SK-N-SH (cell line): ENCODE measurements at regions of chr17 and their contacts with region 1.

Region 1: DNA sequence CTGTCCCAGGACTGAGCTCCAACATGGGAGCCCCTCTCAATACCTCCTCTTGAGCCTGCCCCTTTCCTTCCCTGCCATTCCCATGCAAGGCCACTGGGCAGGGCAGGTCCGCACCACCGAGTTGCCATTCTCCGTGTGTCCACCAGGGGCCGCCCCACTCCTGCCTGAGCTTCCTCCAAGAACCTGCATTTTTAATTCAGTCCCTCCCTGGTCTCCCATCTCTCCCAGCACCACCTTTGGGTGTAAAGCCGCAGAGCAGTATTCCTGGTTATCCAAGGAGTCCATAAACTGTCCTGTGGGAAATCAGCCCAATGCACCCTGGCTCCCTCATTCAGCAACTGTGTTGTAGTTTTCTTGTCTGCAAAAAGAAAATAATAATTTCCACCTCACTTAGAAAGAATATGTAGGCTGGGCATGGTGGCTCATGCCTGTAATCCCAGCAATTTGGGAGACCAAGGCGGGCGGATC is 15.9 kb upstream of the ANKRD40CL start:
- DNase-seq: peak; percentile 97
- H3K4me3 ChIP-seq: no peak overlapping the region
- H3K27ac ChIP-seq: no peak overlapping the region
- H3K4me1 ChIP-seq: no peaks in the 10 kb centered on the region
- H3K27me3 ChIP-seq: no peaks in the 10 kb centered on the region
- CTCF ChIP-seq: peak; percentile 100
- EP300 ChIP-seq: no peak
- RAD21 ChIP-seq: peak; percentile 100

Region 2: GRCh38 chr17:50765454-50766221 is 17.6 kb before region 1 on chr17:
- CTCF ChIA-PET with region 1: interaction called, 95 read pairs
- POLR2A ChIA-PET with region 1: no interaction called
- DNase-seq: no peak
- H3K4me3 ChIP-seq: no peak overlapping the region
- H3K27ac ChIP-seq: peak overlapping the region in 1 of 2 experiments; percentile 7; a peak in 1 of 4 replicates
- H3K4me1 ChIP-seq: peaks cover 0 to 24% of the 10 kb centered on the region in 2 experiments; a peak in 2 of 4 replicates
- H3K27me3 ChIP-seq: no peaks in the 10 kb centered on the region
- CTCF ChIP-seq: no peak
- EP300 ChIP-seq: no peak
- RAD21 ChIP-seq: no peak

Region 3: GRCh38 chr17:50806141-50806643 is 23.0 kb after region 1 on chr17:
- CTCF ChIA-PET with region 1: interaction called, 47 read pairs
- POLR2A ChIA-PET with region 1: no interaction called
- DNase-seq: no peak
- H3K4me3 ChIP-seq: no peak overlapping the region
- H3K27ac ChIP-seq: no peak overlapping the region
- H3K4me1 ChIP-seq: no peaks in the 10 kb centered on the region
- H3K27me3 ChIP-seq: no peaks in the 10 kb centered on the region
- CTCF ChIP-seq: peak; percentile 48
- EP300 ChIP-seq: no peak
- RAD21 ChIP-seq: no peak

Region 4: DNA sequence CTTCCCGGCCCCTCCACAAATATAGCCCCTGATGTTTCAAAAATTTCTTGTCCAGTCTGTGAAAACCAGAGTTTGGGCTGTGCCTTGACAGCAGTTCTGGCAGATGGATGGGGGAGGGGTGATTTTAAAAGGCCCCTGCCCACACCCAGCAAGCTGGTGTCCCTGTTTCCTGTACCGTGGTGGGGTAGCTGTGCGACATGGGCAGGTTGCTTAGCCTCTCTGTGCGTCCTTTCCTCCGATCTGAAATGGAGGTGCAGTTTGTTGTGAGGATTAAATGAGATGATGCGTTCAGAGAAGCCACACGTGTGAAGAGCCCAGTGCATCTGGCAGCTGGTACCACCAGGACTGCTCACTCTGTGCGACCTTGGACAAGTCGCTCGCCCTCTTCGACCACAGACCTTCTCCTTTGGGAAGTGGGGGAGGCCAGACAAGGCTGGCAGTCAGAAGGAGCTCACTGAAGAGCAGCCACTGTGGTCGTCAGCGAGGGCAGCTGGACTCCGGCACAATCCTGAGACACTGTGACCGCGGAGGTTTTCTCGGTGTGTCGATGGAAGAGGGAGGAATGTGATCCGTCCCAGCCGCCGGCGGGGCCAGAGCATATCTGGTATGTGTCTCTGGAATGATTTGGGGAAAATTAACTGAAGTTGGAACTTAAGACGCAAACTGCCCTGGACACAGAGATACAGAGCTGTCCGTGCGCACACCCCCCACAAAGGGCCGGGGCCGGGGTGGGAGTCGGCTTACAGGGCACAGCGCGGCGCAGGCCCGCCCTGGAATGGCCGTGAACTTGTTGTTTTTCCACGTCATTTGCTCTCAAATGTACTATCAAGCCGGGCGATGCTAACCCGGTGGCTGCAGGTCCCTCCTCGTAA is 51.4 kb after region 1 on chr17:
- CTCF ChIA-PET with region 1: interaction called, 520 read pairs
- POLR2A ChIA-PET with region 1: no interaction called
- DNase-seq: no peak
- H3K4me3 ChIP-seq: no peak overlapping the region
- H3K27ac ChIP-seq: no peak overlapping the region
- H3K4me1 ChIP-seq: peaks cover 0 to 12% of the 10 kb centered on the region in 2 experiments; a peak in 1 of 4 replicates
- H3K27me3 ChIP-seq: no peaks in the 10 kb centered on the region; the same call in 1 of the 2 replicates
- CTCF ChIP-seq: no peak
- EP300 ChIP-seq: no peak
- RAD21 ChIP-seq: no peak

Region 5: DNA sequence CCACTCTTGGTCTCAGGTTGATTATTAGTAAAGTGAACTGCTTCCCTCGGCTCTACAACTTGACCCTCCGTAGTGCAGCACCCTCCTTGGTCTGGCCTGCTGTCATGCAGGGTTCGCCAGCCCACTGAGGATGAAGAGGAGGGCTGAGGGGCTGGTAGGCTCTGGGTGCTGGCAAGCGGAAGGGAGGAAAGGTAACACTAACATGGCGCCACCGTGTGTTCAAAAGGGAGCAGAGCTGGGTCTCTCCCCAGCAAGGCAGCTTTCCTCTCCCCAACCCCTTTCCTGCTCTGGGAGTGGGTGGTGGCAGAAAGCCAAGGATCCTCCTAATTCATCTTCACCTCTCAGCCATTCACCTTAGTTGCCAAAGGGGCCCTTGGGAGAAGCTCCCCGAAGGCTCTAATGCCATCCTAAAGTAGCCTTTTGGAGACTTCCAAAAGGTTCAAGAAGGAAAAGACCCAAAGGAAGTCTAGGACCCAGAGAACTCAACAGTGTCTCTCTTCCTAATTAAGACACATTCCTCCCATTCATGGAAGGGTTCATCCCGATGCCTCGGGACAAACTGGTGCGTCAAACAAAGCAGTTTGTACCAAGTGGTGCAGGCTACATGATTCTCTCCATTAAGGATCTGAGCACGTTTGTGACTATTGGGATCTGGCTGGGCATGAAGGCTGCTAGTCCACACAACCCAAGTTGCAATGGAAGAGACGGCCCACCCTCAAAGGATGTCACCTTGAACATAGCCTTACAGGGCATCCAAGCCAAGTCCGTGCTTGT is 173.7 kb after region 1 on chr17:
- CTCF ChIA-PET with region 1: interaction called, 73 read pairs
- POLR2A ChIA-PET with region 1: interaction called, 3 read pairs
- DNase-seq: peak; percentile 75
- H3K4me3 ChIP-seq: no peak overlapping the region; a peak in 1 of 4 replicates
- H3K27ac ChIP-seq: peak overlapping the region in 1 of 2 experiments; percentile 39; a peak in 1 of 4 replicates
- H3K4me1 ChIP-seq: peaks cover 16 to 55% of the 10 kb centered on the region in 2 experiments
- H3K27me3 ChIP-seq: no peaks in the 10 kb centered on the region
- CTCF ChIP-seq: peak; percentile 90
- EP300 ChIP-seq: no peak
- RAD21 ChIP-seq: peak; percentile 89

Region 6: DNA sequence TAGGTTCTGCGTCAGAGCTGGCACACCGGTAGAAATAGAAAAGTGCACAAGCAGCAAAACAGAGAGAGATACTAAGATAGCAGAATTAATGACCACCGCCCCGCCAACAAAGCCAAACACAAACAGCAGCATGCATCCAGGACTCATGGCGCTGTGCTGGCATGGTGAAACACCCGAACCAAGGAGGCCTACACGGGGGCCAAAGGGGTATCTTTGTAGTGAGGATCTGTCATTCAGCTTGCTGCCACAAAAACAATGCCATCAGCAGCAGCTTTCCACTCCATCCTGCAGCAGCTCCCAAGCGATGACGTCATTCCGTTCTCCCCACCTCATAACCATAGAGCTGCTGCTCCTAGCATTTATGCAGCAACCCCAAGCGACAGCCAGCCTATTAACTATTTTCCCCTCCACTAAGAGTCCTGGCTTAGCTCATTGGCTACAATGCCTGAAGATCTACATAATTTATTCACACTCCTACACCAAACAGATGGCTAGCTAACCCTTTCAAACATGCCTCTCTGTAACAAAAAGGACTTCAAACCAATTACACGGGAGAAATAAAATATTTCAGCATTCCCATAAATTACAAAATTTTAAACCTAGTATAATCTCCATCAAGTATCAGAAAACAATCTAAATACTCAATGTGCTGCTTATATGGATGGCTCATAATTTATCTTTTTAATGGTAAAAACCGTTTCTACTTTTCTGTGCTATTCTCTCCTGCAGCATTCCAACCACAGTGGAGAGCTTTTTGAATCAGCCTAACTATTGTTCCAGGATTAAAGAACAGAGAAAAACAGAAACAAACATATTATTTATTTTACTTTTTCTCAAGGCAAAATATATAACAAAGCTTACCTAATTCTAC is 263.5 kb after region 1 on chr17:
- CTCF ChIA-PET with region 1: interaction called, 10 read pairs
- POLR2A ChIA-PET with region 1: no interaction called
- DNase-seq: peak; percentile 84
- H3K4me3 ChIP-seq: peak overlapping the region; percentile 56 to 60
- H3K27ac ChIP-seq: peak overlapping the region; percentile 71 to 94
- H3K4me1 ChIP-seq: peaks cover 26 to 32% of the 10 kb centered on the region in 2 experiments
- H3K27me3 ChIP-seq: no peaks in the 10 kb centered on the region
- CTCF ChIP-seq: no peak; the same call in 1 of the 2 replicates
- EP300 ChIP-seq: peak in 1 of 2 experiments; percentile 57; a peak in 2 of 4 replicates
- RAD21 ChIP-seq: no peak